Sigmoid colon (tissue), 7 donors: ENCODE measurements at regions of chrX and their contacts with region 1.

Region 1: DNA sequence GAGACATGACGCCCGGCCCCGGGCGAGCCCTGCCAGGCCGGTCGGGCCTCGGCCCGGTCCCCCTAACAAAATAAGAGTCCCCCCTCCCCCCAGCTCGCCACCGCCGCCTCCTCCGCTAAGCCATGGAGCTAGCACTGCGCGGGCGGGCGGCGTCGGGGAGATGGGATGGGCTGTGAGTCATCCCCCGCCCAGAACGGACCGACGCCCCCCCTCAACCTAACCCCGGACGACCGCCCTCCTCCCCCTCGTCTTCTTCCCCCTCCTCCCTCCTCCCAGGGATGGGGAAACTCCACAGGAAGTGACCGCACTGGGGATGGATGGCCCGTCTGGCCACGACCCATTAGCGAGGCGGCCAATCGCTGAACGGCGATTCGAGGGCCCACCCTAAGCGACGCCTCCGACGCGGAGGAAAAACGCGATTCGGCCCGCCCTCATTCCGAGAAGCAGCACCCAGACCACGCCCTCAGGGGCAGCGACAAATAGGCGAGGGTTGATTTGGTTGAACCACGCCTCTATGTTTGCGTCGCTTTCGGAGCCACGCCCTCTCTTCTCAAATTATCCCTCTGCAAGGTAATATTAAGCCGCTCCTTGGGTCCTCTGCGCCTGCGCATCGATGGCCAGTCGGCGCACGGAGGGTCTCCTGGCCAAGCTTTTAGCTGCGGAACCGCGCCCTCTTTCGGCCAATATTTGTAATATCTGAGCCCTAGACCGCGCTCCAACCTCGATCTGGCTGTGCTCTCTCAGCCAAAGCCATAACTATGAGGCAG is at the start of gene TFE3:
- DNase-seq: peak; percentile 99
- H3K4me3 ChIP-seq: peak within 1 kb of the TSS; percentile 70 to 90 (median 76)
- H3K27ac ChIP-seq: peak within 1 kb of the TSS; percentile 95 to 100 (median 98)
- H3K4me1 ChIP-seq: peaks cover 0 to 24% (median 22%) of the 10 kb centered on the region in 4 donors
- H3K27me3 ChIP-seq: no peaks in the 10 kb centered on the region
- CTCF ChIP-seq: peak in 2 of 4 experiments; percentile 46 to 51
- EP300 ChIP-seq: peak in 1 of 4 donors; percentile 16
- POLR2A ChIP-seq: peak; percentile 66 to 77
- total RNA-seq, gene TFE3: 38.3 to 69.8 (median 56.0) TPM

Region 2: GRCh38 chrX:47650164-47651042 is 1393.0 kb before region 1 on chrX and contains the start of gene ELK1:
- intact Hi-C with region 1: loop called (anchors 10 kb)
- DNase-seq: peak; percentile 99
- H3K4me3 ChIP-seq: peak within 1 kb of the TSS; percentile 51 to 73 (median 70)
- H3K27ac ChIP-seq: peak within 1 kb of the TSS; percentile 86 to 92 (median 88)
- H3K4me1 ChIP-seq: peaks cover 0 to 18% (median 12%) of the 10 kb centered on the region in 4 donors
- H3K27me3 ChIP-seq: no peaks in the 10 kb centered on the region
- CTCF ChIP-seq: no peak
- EP300 ChIP-seq: no peak
- POLR2A ChIP-seq: peak; percentile 43 to 50
- total RNA-seq, gene ELK1: 12.1 to 18.8 (median 16.8) TPM

Region 3: GRCh38 chrX:48917139-48918001 is 126.0 kb before region 1 on chrX:
- intact Hi-C with region 1: loop called (anchors 5 kb)
- DNase-seq: peak; percentile 95
- H3K4me3 ChIP-seq: peak overlapping the region in 2 of 4 donors; percentile 8 to 20
- H3K27ac ChIP-seq: peak overlapping the region; percentile 82 to 90 (median 86)
- H3K4me1 ChIP-seq: peaks cover 0 to 20% (median 8%) of the 10 kb centered on the region in 4 donors
- H3K27me3 ChIP-seq: no peaks in the 10 kb centered on the region
- CTCF ChIP-seq: peak; percentile 82 to 88 (median 84)
- EP300 ChIP-seq: no peak
- POLR2A ChIP-seq: no peak

Region 4: GRCh38 chrX:48957827-48958634 is 85.4 kb before region 1 on chrX:
- intact Hi-C with region 1: loop called (anchors 2 kb)
- DNase-seq: peak; percentile 99
- H3K4me3 ChIP-seq: peak overlapping the region; percentile 45 to 71 (median 70)
- H3K27ac ChIP-seq: peak overlapping the region; percentile 89 to 90 (median 90)
- H3K4me1 ChIP-seq: peaks cover 0 to 43% (median 26%) of the 10 kb centered on the region in 4 donors
- H3K27me3 ChIP-seq: no peaks in the 10 kb centered on the region
- CTCF ChIP-seq: no peak
- EP300 ChIP-seq: no peak
- POLR2A ChIP-seq: peak; percentile 17 to 66

Region 5: DNA sequence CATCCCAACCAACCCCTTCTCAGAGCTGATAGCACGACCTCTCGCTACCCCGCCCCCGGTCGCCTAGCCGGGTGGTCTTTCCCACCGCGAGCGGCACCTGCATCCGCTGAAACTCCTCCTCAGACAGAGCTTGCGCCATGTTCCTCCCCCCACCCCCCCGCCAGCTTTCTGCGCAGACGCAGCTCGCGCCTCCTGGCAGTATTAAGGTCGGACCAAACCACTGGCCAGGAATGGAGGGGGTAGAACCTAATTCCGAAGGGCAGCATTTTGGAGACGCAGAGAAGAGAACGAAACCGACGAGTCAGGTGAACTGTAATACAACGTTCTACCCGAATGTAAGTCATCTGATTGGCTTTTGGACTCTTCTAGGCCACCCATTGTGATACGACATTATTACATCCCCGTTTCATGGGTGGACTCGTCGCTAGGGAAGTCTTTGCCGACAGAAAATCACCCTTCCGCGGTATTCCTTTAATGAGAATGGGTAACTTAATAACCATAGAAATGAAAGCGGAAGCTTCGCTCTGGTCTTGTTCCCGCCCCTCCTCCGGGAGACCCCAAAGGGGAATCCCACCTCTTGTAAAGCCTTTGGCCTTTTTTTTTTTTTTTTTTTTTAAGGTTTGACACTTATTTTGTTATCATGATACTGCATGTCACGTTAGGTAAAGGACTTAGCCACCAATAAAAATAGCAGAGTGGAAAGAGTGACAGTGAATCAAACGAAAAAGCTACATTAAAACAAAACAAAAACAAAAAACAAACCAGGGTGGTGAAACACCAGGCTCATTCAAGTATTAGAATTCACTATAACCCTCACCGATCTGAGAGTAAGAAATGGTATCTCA is 41.1 kb before region 1 on chrX and contains the start of gene GRIPAP1:
- intact Hi-C with region 1: loop called (anchors 5 kb)
- DNase-seq: peak; percentile 77
- H3K4me3 ChIP-seq: peak within 1 kb of the TSS; percentile 57 to 67 (median 63)
- H3K27ac ChIP-seq: peak within 1 kb of the TSS; percentile 69 to 84 (median 75)
- H3K4me1 ChIP-seq: peaks cover 0 to 9% (median 6%) of the 10 kb centered on the region in 4 donors
- H3K27me3 ChIP-seq: no peaks in the 10 kb centered on the region
- CTCF ChIP-seq: no peak
- EP300 ChIP-seq: no peak
- POLR2A ChIP-seq: peak; percentile 60 to 65
- total RNA-seq, gene GRIPAP1: 19.7 to 63.1 (median 29.7) TPM

Region 6: GRCh38 chrX:49163555-49164419 is 120.4 kb after region 1 on chrX:
- intact Hi-C with region 1: loop called (anchors 10 kb)
- DNase-seq: peak; percentile 94
- H3K4me3 ChIP-seq: peak overlapping the region; percentile 14 to 45 (median 40)
- H3K27ac ChIP-seq: peak overlapping the region; percentile 89 to 92 (median 91)
- H3K4me1 ChIP-seq: peaks cover 0 to 13% (median 11%) of the 10 kb centered on the region in 4 donors
- H3K27me3 ChIP-seq: no peaks in the 10 kb centered on the region
- CTCF ChIP-seq: peak in 2 of 4 experiments; percentile 23 to 76
- EP300 ChIP-seq: no peak
- POLR2A ChIP-seq: no peak